ENCODE measurements at regions of chr2 and their contacts with region 1.

Region 1: DNA sequence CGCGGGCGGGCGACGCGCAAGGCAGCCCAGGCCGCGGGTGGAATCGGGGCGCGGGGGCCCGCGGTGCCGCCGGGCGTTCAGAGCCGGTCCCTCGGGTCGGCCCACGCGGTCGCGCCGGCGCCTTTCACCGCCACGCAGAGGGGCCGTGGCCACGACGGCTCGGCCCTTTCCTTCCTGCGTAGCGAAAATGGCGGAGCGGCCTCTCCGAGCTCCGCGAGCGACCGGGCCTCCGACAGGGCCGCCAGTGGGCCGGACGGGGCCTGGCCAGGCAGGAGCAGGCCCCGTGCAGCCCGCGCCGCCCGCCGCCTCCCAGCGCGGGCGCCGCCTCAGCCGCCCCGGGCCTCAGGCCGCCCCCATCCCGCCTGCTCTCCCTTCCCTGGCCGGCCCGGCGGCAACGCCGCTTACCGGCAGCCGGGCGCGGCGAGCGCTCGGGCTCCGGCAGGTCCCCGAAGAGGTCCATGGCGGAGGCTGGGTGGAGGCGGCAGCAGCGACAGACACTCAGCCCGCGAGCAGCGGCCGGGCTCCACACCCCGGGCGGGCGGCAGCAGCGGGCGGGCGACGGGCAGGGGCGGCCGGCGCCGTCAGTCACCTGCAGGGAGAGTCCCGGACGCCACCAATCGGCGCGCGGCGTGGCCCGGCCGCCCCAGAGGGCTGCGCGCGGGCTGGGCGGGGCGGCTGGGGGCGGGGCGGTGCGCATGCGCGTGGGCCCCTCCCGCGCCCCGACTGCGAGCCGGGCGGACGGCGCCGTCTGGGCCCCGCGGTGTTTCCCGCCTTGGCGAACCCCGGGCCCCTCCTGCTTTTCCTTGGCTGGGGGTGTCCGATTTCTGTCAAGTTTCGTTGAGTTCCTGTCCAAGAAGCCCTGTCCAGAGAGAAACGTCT is at the start of gene ILKAP:
- H3K4me3 Mint-ChIP-seq: peak within 1 kb of the TSS; percentile 80
- H3K27ac Mint-ChIP-seq: peak within 1 kb of the TSS; percentile 80
- H3K4me1 Mint-ChIP-seq: peaks cover 42% of the 10 kb centered on the region
- H3K27me3 Mint-ChIP-seq: peaks cover 3% of the 10 kb centered on the region

Region 2: GRCh38 chr2:237998530-237998929 is 204.8 kb before region 1 on chr2:
- intact Hi-C with region 1: no loop called
- H3K4me3 Mint-ChIP-seq: no peak overlapping the region
- H3K27ac Mint-ChIP-seq: no peak overlapping the region
- H3K4me1 Mint-ChIP-seq: no peaks in the 10 kb centered on the region
- H3K27me3 Mint-ChIP-seq: no peaks in the 10 kb centered on the region

Region 3: GRCh38 chr2:238239872-238240751 is 36.8 kb after region 1 on chr2 and contains the start of gene HES6:
- intact Hi-C with region 1: loop called (anchors 5 kb)
- H3K4me3 Mint-ChIP-seq: peak within 1 kb of the TSS; percentile 83
- H3K27ac Mint-ChIP-seq: no peak within 1 kb of the TSS
- H3K4me1 Mint-ChIP-seq: peaks cover 17% of the 10 kb centered on the region
- H3K27me3 Mint-ChIP-seq: peaks cover 65% of the 10 kb centered on the region